Pancreas (tissue), 10 donors: ENCODE measurements at regions of chr21 and their contacts with region 1.

Region 1: DNA sequence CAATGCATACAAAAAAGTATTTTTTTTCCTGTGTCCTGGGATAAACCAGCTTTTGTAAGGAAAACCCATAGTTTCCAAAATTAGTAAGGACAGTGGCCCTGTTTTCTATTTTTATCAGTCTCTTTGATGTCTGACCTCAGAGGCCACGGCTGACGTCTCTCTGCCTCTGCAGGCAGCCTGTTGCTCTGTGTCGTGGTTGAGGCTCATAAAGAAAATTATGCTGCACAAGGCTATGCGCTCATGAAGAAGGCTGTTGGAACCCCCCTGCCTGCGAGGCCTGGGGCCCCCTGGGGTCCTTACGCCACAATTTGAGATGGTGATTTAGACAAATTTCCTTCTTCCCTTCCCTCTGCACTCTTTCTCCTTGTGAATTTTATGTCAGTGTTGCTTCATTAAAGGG is 48.9 kb downstream of the AGPAT3 start:
- DNase-seq: peak in 1 of 6 donors; percentile 12
- ATAC-seq: no peak
- H3K4me3 ChIP-seq: no peak overlapping the region
- H3K27ac ChIP-seq: no peak overlapping the region
- H3K4me1 ChIP-seq: no peaks in the 10 kb centered on the region
- H3K27me3 ChIP-seq: no peaks in the 10 kb centered on the region
- CTCF ChIP-seq: no peak

Region 2: DNA sequence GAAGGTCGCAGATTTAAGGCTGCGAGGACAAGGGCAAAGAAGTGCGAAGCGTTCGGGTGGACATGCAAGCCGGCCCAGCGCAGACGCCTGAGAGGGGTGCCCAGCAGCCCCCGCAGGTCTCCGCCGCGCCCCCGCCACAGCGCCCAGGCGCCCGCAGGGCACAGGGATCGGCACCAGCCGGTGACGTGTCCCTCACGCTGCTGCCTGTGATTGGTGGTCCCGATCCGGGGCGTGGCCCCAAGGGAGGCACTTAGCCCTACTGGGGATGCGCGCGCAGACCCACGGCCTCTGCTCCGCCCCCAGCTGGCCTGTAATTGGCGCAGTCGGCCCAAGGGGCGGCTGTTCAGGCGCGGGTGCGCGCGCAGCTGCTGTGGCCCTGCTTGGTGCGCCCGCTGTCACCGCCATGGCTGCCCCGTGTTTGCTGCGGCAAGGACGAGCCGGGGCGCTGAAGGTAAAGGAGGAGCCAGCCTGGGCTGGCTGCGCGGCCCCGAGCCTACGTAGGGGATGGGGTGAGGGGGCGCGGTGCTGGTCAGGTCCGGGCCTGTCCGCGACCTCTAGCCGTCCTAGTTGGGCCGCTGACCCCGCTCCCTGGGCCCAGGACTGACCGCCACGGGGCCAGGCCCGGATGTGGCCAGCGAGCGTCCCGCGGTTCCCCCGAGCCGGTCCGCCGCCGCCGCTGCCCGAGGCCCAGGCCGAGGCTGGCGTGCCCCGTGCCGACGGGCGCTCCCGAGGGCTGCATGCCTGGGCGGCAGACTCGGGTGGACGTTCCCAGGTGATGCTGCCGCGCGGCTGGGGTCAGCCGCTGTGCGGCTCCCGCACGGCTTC is 1020.8 kb before region 1 on chr21 and contains the start of gene NDUFV3:
- intact Hi-C with region 1: loop called in 1 of 3 experiments (anchors 5 kb)
- DNase-seq: peak; percentile 99 to 100 (median 100)
- ATAC-seq: peak; percentile 95 to 99 (median 96)
- H3K4me3 ChIP-seq: peak within 1 kb of the TSS; percentile 75 to 95 (median 86)
- H3K27ac ChIP-seq: peak within 1 kb of the TSS; percentile 83 to 94 (median 90)
- H3K4me1 ChIP-seq: peaks cover 0 to 6% (median 0%) of the 10 kb centered on the region in 3 donors
- H3K27me3 ChIP-seq: no peaks in the 10 kb centered on the region
- CTCF ChIP-seq: no peak
- total RNA-seq, gene NDUFV3: 16.6 to 30.1 (median 21.9) TPM